Uterus (tissue), 4 donors: ENCODE measurements at regions of chr11 and their contacts with region 1.

Region 1: DNA sequence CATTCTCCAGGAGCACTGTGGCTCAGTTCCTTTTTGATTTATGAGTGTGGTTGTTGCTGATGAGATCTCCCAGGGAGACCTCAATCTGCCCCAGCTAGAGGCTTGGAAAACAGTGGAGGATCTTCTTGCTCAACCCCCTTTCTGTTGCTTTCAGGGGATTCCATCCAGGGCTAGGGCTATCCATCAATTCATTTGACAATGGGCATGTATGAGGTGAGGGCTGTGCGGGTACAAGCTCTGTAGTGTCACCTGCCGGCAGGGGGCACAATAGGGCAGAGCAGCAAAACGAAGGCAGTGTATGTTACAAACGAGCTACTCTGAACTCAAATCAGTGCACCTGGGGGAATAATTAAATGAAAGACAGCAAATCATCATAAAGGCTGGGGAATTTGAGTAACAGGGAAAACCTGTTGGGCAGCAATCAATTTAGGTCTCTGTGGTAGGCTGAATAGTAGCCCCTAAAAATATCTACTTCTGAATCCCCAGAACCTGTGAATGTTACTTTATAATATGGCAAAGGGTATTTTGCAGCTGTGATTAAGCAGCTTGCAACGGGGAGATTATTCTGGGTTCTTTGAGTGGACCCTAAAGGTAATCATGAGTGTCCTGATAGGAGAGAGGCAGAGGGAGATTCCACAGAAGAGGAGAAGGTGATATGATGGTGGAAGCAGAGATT is 170.3 kb upstream of the ZBED5 start:
- DNase-seq: peak; percentile 45 to 49
- H3K4me3 ChIP-seq: no peak overlapping the region
- H3K27ac ChIP-seq: peak overlapping the region in 1 of 2 donors; percentile 27
- H3K4me1 ChIP-seq: no peaks in the 10 kb centered on the region
- H3K27me3 ChIP-seq: no peaks in the 10 kb centered on the region
- CTCF ChIP-seq: peak; percentile 50 to 68 (median 64)
- POLR2A ChIP-seq: no peak

Region 2: DNA sequence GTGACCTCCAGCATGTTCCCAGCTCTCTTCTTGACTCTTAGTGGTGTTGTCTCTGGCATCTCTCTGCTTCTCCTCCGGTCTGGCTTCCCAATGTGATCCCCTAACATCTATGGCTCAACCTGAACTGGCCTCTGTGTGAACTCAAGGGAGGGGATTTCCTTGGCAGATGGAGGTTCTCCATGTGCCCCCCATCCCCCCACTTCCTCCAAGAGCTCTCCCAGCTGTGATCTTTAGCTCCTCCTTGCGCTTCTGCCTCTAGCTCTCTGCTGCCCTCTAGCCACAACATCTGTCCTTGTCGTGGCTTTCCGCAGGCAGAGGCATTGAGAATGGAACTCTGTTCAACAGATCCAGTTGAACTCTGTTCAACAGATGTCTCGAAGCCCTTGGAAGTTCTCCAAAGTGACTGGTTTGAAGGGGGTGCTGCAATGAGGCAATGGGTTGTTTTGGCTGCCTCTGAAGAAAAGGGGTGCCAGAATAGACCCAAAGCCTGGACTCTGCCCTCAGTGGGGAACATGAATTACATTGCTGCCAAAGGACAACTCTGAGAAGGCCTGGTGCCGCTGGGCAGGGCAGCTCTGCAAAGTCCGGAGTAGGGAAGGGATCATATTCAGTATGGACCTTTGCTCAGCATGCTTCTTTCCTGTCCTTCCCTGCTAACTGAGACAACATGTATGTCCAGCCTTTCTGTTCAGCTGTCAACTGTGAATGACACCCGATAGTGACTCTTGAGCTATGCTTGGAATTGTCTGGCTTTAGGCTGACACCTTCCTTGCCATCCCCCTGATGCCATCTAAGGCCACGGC is 661.4 kb before region 1 on chr11:
- intact Hi-C with region 1: no loop called
- DNase-seq: peak; percentile 84 to 87
- H3K4me3 ChIP-seq: no peak overlapping the region
- H3K27ac ChIP-seq: peak overlapping the region; percentile 35 to 60
- H3K4me1 ChIP-seq: no peaks in the 10 kb centered on the region
- H3K27me3 ChIP-seq: no peaks in the 10 kb centered on the region
- CTCF ChIP-seq: peak; percentile 48 to 81 (median 65)
- POLR2A ChIP-seq: no peak

Region 3: GRCh38 chr11:10784232-10785145 is 243.7 kb before region 1 on chr11:
- intact Hi-C with region 1: loop called (anchors 10 kb)
- DNase-seq: no peak
- H3K4me3 ChIP-seq: no peak overlapping the region
- H3K27ac ChIP-seq: no peak overlapping the region
- H3K4me1 ChIP-seq: no peaks in the 10 kb centered on the region
- H3K27me3 ChIP-seq: no peaks in the 10 kb centered on the region
- CTCF ChIP-seq: no peak
- POLR2A ChIP-seq: no peak

Region 4: GRCh38 chr11:11476971-11477645 is 449.0 kb after region 1 on chr11:
- intact Hi-C with region 1: no loop called
- DNase-seq: no peak
- H3K4me3 ChIP-seq: no peak overlapping the region
- H3K27ac ChIP-seq: no peak overlapping the region
- H3K4me1 ChIP-seq: no peaks in the 10 kb centered on the region
- H3K27me3 ChIP-seq: no peaks in the 10 kb centered on the region
- CTCF ChIP-seq: no peak
- POLR2A ChIP-seq: no peak